Gastrocnemius medialis (tissue), 4 donors: ENCODE measurements at regions of chr19 and their contacts with region 1.

Region 1: DNA sequence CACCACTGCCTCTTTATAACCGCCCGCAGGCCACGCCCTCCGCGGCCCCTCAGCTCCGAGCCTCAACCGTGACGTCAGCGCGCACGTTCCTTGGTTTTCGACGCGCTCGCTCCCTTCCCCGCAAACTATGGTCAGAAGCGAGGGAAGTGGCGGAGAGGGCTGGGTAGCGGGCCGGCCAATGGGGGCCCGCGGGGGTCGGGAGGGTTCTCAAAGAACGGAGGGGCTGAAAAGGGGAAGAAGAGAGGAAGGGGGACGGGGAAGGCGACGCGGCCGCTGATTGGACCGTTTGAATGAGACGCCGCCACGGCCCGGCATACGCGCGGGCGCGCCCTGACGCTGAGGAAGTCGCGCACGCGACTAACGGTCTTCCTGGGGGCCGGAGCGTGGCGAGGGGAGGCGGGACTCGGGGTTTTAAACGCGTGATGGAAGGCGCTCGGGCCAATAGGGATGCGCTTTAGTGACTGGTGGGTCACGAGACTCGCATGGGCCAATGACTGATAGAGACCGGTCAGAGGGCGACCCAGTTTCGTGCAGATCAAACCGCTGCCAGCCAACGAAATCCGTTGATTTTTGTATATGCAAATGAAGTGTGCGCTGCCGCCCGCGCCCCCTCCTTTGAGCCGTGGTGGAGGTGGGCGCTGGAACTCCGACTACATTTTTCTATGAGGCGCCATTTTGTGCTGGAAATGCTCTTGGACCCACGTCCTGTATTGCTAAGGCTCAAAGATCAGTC is 378 bp upstream of the UBE2S start:
- DNase-seq: peak; percentile 96 to 97
- ATAC-seq: peak; percentile 96 to 98
- H3K4me3 ChIP-seq: peak overlapping the region; percentile 68 to 85 (median 70)
- H3K27ac ChIP-seq: peak overlapping the region; percentile 91 to 97 (median 93)
- H3K4me1 ChIP-seq: peaks cover 0 to 15% of the 10 kb centered on the region in 2 donors
- H3K27me3 ChIP-seq: no peaks in the 10 kb centered on the region
- CTCF ChIP-seq: no peak
- POLR2A ChIP-seq: no peak

Region 2: DNA sequence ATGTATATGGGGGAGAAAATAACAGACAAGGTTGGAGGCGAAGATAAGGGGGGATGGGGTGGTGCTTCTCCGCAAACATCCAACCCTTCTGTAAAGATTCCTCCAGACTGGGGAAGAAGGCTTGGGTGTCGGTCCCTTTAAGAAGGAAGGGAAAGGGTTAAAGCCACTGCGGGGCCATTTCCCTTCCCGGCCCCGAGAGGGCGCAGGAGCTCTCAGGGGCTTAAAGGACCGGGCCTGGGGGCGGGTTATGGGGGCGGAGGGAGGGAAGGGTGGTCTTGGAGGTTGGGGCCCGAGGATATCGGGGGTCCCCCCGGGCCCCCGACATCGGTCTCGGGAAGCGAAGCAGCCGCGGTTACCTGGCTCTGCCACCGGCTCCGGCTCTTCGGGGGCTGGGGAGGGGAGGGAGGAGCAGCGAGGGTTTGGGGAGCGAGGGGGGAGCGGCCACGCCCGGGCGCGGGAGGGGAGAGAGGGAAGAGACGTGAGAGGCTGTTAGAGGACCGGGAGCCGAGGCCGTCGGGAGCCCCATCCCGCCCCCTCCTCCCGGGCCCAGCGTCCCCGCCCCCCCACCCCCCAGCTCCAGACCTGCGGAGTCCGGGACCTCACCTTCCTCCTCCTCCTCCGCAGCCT is 261.8 kb before region 1 on chr19:
- in situ Hi-C with region 1: loop called in 1 of 4 experiments (anchors 25 kb)
- intact Hi-C with region 1: no loop called
- DNase-seq: peak in 1 of 2 donors; percentile 52
- ATAC-seq: no peak
- H3K4me3 ChIP-seq: peak overlapping the region; percentile 48 to 65 (median 56)
- H3K27ac ChIP-seq: peak overlapping the region; percentile 82 to 96 (median 93)
- H3K4me1 ChIP-seq: peaks cover 7 to 30% of the 10 kb centered on the region in 2 donors
- H3K27me3 ChIP-seq: peaks cover 14 to 30% (median 30%) of the 10 kb centered on the region in 3 donors
- CTCF ChIP-seq: peak; percentile 30 to 70 (median 56)
- POLR2A ChIP-seq: no peak

Region 3: DNA sequence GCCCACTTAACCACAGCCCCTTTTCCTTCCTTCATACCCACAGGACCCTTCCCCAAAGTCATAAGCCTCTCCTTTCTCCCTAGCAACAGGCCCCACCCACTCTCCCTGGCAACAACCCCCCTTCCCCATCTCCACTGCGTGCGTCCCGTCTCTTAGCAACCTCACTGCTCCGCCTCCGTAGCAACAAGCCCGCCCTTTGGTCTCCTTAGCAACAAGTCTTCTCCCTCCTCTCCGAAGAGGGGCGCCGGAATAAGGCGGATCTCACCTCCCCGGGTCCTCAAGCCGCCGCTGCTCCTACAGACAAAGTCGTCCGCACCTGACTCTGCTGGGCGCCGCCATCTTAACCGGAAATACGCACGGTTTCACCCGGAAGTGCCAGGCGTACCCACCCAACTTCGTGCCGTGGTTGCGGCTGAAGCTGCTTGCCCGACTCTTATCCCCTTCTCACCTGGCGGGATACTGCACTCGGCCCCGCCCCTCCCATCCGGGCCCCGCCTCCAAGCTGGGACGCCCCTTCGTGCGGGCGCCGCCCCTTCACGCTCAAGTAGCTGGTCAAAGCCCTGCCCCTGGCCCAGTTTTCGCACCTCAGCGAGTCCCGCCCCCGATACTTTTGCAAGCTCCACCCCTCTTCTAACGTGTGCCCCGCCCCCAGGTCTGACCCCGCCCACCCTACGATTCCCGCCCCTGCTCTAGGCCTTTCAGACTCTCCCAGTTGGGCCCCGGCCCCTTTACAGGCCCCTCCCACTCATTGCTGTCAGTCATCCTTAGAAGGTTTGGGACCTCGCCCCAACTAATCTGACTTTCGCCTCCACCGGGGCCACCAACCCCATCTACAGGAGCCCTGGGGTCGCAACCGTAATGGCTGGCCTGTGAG is 128.0 kb before region 1 on chr19 and contains the start of gene HSPBP1:
- in situ Hi-C with region 1: loop called in 1 of 4 experiments (anchors 25 kb)
- intact Hi-C with region 1: no loop called
- DNase-seq: peak; percentile 76 to 87
- ATAC-seq: peak; percentile 94 to 98
- H3K4me3 ChIP-seq: peak within 1 kb of the TSS; percentile 63 to 97 (median 82)
- H3K27ac ChIP-seq: peak within 1 kb of the TSS; percentile 70 to 86 (median 81)
- H3K4me1 ChIP-seq: peaks cover 7 to 8% of the 10 kb centered on the region in 2 donors
- H3K27me3 ChIP-seq: peaks cover 0 to 9% (median 0%) of the 10 kb centered on the region in 3 donors
- CTCF ChIP-seq: no peak
- POLR2A ChIP-seq: no peak
- total RNA-seq, gene HSPBP1: 18.5 to 41.7 (median 36.7) TPM

Region 4: DNA sequence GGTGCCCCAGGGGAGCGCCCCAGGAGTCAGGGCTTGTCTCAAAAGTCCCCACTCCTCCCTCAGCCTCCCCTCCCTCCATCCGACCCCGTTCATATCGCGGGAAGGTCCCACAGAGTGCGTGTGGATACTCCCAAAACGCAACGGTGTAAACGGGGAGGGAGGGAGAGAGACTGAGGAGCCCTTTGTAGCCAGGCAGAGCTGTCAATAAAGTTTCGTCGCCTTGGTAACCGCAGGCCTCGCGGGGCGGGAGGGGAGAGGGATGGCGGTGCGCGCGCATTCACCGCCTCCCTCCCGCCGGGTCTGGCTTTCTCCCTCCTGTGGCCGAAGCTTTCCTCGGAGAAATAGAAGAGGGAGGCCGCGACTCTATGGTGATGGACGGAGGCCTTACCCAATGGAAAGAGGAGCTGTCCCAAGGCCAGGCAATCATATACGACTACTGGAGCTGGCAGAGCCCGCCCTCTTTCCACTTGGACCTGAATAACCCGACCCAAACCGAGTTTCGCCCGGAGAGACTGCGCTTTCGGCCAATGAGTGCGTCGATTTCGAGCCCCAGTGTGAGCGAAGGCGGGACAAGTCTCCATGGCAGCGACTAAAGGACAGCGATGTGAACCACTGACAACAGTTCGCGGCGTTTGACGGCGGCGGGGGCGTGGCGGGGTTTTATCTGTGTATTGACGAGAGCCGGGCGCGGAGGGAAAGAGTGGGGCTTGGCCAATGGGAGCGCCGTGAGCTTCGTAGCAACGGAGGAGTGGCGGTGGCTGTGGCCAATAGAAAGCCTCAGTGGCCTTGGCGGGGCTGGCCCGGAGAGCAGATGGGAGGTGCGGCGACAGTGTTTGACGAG is 68.7 kb before region 1 on chr19 and contains the start of gene KMT5C:
- in situ Hi-C with region 1: no loop called
- intact Hi-C with region 1: loop called (anchors 1 kb)
- DNase-seq: peak; percentile 100
- ATAC-seq: peak; percentile 94 to 95
- H3K4me3 ChIP-seq: peak within 1 kb of the TSS; percentile 65 to 82 (median 75)
- H3K27ac ChIP-seq: peak within 1 kb of the TSS; percentile 83 to 97 (median 91)
- H3K4me1 ChIP-seq: peaks cover 12 to 22% of the 10 kb centered on the region in 2 donors
- H3K27me3 ChIP-seq: peaks cover 0 to 10% (median 7%) of the 10 kb centered on the region in 3 donors
- CTCF ChIP-seq: peak in 4 of 5 experiments; percentile 38 to 65 (median 52)
- POLR2A ChIP-seq: peak in 1 of 2 donors; percentile 85
- total RNA-seq, gene KMT5C: 2.5 to 5.4 (median 4.5) TPM

Region 5: GRCh38 chr19:55461259-55461973 is 53.5 kb after region 1 on chr19 and contains the start of gene ISOC2:
- in situ Hi-C with region 1: no loop called
- intact Hi-C with region 1: loop called (anchors 5 kb)
- DNase-seq: peak; percentile 100
- ATAC-seq: peak; percentile 96 to 97
- H3K4me3 ChIP-seq: peak within 1 kb of the TSS; percentile 76 to 94 (median 86)
- H3K27ac ChIP-seq: peak within 1 kb of the TSS; percentile 89 to 97 (median 94)
- H3K4me1 ChIP-seq: peaks cover 12 to 13% of the 10 kb centered on the region in 2 donors
- H3K27me3 ChIP-seq: no peaks in the 10 kb centered on the region
- CTCF ChIP-seq: no peak
- POLR2A ChIP-seq: peak; percentile 77 to 82
- total RNA-seq, gene ISOC2: 59.7 to 101 (median 88.7) TPM

Region 6: DNA sequence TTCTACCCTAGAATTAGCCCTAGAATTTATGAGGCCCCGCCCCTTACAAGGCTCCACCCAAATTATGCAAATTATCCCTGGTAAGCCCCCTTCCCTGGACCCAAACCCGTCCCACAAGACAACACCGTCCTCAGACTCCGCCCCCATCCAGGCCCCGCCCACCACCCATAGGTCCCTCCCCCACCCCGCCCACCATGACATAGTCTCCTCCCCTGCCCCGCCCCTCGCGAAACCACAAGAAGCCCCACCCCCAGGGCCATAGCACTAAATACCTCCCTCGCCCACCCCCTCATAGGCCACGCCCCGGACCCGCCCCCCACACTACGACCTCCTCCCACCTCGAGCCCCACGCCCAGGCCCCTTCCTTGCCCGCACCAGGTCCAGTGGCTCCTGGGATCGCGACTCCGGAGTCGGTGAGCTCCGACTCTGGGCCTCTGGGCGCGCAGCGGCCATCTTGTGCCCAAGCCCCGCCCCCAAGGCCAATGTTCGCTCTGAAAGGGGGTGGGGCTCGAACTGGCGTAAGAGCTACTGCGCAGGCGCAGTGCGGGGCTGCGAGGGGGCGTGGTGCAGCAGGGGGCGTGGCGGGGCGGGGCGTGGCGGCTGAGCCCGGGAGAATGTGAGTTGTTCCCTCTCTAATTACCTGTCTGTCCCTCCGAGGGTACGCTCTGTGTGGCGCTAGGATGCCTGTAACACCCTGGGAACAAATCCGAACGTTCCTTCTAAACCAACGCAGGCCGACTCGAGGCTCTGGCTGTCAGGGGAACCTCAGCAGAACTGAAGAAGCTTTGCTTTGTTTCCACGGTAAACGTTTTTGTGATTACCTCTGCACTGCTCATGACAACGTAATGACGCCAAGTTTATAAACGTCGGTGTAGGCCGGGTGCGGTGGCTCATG is 216.4 kb after region 1 on chr19 and contains the start of gene ZNF784:
- in situ Hi-C with region 1: no loop called
- intact Hi-C with region 1: loop called (anchors 5 kb)
- DNase-seq: peak; percentile 89 to 91
- ATAC-seq: peak; percentile 76 to 83
- H3K4me3 ChIP-seq: peak within 1 kb of the TSS; percentile 71 to 77 (median 74)
- H3K27ac ChIP-seq: peak within 1 kb of the TSS; percentile 97 to 99 (median 98)
- H3K4me1 ChIP-seq: peaks cover 30 to 37% of the 10 kb centered on the region in 2 donors
- H3K27me3 ChIP-seq: no peaks in the 10 kb centered on the region
- CTCF ChIP-seq: no peak
- POLR2A ChIP-seq: peak; percentile 38 to 49
- total RNA-seq, gene ZNF784: 6.0 to 10.0 (median 8.2) TPM